ENCODE measurements at regions of chr6 and their contacts with region 1.

Region 1: DNA sequence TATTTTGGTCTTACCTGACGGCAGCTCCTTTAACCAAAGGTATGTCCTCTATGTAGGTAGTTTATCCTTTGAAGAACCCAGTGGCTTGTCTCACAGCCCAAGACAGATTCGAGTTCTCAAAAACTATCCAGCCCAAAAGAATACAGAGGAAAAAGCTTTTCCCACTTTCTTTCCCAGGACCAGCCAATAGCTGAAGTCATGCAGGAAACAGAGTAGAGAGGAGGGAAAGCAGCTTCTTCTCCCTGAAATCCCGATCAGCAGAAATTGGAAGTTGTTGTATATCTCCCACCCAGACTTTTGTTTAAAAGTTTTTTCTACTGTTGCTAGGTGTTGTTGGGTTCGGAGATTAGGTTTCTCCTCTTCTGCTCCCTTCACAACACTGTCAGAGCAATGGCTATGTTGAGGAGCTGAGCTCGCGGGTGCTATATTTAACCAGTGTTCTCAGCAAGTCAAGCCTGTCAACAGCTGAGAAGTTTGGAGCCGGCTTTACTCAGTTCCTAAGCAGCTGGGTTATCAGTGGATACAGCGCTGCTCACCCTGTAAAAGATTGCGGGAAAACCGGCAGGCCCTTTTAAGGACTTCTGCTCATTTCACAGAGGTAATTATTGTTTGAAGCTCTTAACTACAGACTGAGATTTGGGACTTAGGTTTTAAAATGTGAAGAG is at the start of gene FILIP1:
- DNase-seq: no peak
- ATAC-seq: peak; percentile 44
- H3K4me3 ChIP-seq: peak within 1 kb of the TSS; percentile 39; the same call in 1 of the 2 replicates
- H3K27ac ChIP-seq: peak within 1 kb of the TSS; percentile 63
- H3K4me1 ChIP-seq: peaks cover 27% of the 10 kb centered on the region
- H3K27me3 ChIP-seq: no peaks in the 10 kb centered on the region
- CTCF ChIP-seq: no peak
- EP300 ChIP-seq: no peak
- POLR2A ChIP-seq: no peak
- RAD21 ChIP-seq: no peak
- polyA plus RNA-seq, gene FILIP1: 0.23 to 0.33 TPM

Region 2: GRCh38 chr6:75284632-75285286 is 208.8 kb before region 1 on chr6 and contains the start of gene TMEM30A:
- CTCF ChIA-PET with region 1: interaction called, 3 read pairs
- POLR2A ChIA-PET with region 1: interaction called, 12 read pairs
- RAD21 ChIA-PET with region 1: interaction called, 11 read pairs
- SMC1A ChIA-PET with region 1: interaction called, 27 read pairs
- in situ Hi-C with region 1: no loop called
- intact Hi-C with region 1: loop called (anchors 5 kb)
- DNase-seq: peak; percentile 100
- ATAC-seq: peak; percentile 80
- H3K4me3 ChIP-seq: peak within 1 kb of the TSS; percentile 94
- H3K27ac ChIP-seq: peak within 1 kb of the TSS; percentile 80
- H3K4me1 ChIP-seq: no peaks in the 10 kb centered on the region
- H3K27me3 ChIP-seq: no peaks in the 10 kb centered on the region
- CTCF ChIP-seq: no peak
- EP300 ChIP-seq: peak in 1 of 2 experiments; percentile 71; a peak in 1 of 4 replicates
- POLR2A ChIP-seq: peak; percentile 96
- RAD21 ChIP-seq: no peak
- polyA plus RNA-seq, gene TMEM30A: 11.9 to 23.1 TPM

Region 3: DNA sequence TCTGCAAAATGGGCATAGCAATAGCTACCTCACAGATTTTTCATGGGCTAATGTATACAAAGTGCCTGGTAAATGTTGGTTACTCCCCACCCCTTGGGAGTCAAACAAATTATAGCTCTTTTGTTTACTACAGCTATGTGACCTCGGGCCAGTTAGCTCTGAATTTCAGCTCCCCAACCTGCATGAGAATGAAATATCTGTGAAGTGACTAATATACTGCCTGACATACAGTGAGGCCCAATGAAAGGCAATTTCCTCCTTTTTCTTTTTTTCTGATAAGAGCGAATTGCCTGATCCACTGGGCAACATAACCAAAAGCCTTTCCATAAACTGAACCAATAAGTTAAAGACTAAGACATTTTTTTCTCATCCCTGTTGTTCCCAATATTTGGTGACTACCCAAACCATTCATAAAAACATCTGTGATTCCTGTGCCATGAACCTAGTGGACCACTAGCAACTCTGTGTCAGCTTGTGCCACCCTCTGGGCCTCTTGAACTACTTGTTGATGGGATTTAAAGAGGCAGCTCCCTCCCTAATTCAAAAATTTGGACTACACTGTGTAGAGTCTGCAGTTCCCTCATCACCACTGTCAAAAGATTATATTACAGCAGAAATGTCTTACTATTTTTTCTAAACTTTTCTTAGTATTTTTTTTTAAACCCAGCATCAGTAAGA is 117.0 kb before region 1 on chr6:
- CTCF ChIA-PET with region 1: no interaction called
- POLR2A ChIA-PET with region 1: interaction called, 7 read pairs
- RAD21 ChIA-PET with region 1: interaction called, 3 read pairs
- SMC1A ChIA-PET with region 1: interaction called, 37 read pairs
- in situ Hi-C with region 1: no loop called
- intact Hi-C with region 1: loop called (anchors 10 kb)
- DNase-seq: no peak
- ATAC-seq: peak; percentile 52
- H3K4me3 ChIP-seq: no peak overlapping the region
- H3K27ac ChIP-seq: no peak overlapping the region
- H3K4me1 ChIP-seq: no peaks in the 10 kb centered on the region
- H3K27me3 ChIP-seq: no peaks in the 10 kb centered on the region
- CTCF ChIP-seq: no peak
- EP300 ChIP-seq: no peak
- POLR2A ChIP-seq: no peak
- RAD21 ChIP-seq: no peak

Region 4: GRCh38 chr6:75481936-75482593 is 11.5 kb before region 1 on chr6:
- CTCF ChIA-PET with region 1: interaction called, 9 read pairs
- POLR2A ChIA-PET with region 1: interaction called, 8 read pairs
- RAD21 ChIA-PET with region 1: interaction called, 14 read pairs
- SMC1A ChIA-PET with region 1: interaction called, 64 read pairs
- in situ Hi-C with region 1: no loop called
- intact Hi-C with region 1: no loop called
- DNase-seq: no peak
- ATAC-seq: no peak
- H3K4me3 ChIP-seq: no peak overlapping the region
- H3K27ac ChIP-seq: no peak overlapping the region
- H3K4me1 ChIP-seq: 0 out of 2 replicates have a peak, but pooled peaks cover 4% of the 10 kb centered on the region
- H3K27me3 ChIP-seq: no peaks in the 10 kb centered on the region
- CTCF ChIP-seq: no peak
- EP300 ChIP-seq: no peak
- POLR2A ChIP-seq: no peak
- RAD21 ChIP-seq: no peak

Region 5: GRCh38 chr6:75759207-75759606 is 265.7 kb after region 1 on chr6:
- CTCF ChIA-PET with region 1: interaction called, 3 read pairs
- POLR2A ChIA-PET with region 1: no interaction called
- RAD21 ChIA-PET with region 1: no interaction called
- SMC1A ChIA-PET with region 1: no interaction called
- in situ Hi-C with region 1: no loop called
- intact Hi-C with region 1: loop called (anchors 10 kb)
- DNase-seq: no peak
- ATAC-seq: peak; percentile 65
- H3K4me3 ChIP-seq: no peak overlapping the region
- H3K27ac ChIP-seq: no peak overlapping the region
- H3K4me1 ChIP-seq: no peaks in the 10 kb centered on the region
- H3K27me3 ChIP-seq: no peaks in the 10 kb centered on the region
- CTCF ChIP-seq: no peak
- EP300 ChIP-seq: no peak
- POLR2A ChIP-seq: no peak
- RAD21 ChIP-seq: no peak

Region 6: GRCh38 chr6:76264468-76264867 is 770.9 kb after region 1 on chr6:
- CTCF ChIA-PET with region 1: no interaction called
- POLR2A ChIA-PET with region 1: no interaction called
- RAD21 ChIA-PET with region 1: no interaction called
- SMC1A ChIA-PET with region 1: no interaction called
- in situ Hi-C with region 1: no loop called
- intact Hi-C with region 1: no loop called
- DNase-seq: no peak
- ATAC-seq: no peak
- H3K4me3 ChIP-seq: no peak overlapping the region
- H3K27ac ChIP-seq: no peak overlapping the region
- H3K4me1 ChIP-seq: no peaks in the 10 kb centered on the region
- H3K27me3 ChIP-seq: no peaks in the 10 kb centered on the region
- CTCF ChIP-seq: no peak
- EP300 ChIP-seq: no peak
- POLR2A ChIP-seq: no peak
- RAD21 ChIP-seq: no peak